Aorta (tissue), 5 donors: ENCODE measurements at regions of chr18 and their contacts with region 1.

Region 1: GRCh38 chr18:52596748-52597435 is 256.9 kb downstream of the DCC start:
- DNase-seq: no peak
- ATAC-seq: no peak
- H3K4me3 ChIP-seq: no peak overlapping the region
- H3K27ac ChIP-seq: no peak overlapping the region
- H3K4me1 ChIP-seq: no peaks in the 10 kb centered on the region
- H3K27me3 ChIP-seq: no peaks in the 10 kb centered on the region

Region 2: DNA sequence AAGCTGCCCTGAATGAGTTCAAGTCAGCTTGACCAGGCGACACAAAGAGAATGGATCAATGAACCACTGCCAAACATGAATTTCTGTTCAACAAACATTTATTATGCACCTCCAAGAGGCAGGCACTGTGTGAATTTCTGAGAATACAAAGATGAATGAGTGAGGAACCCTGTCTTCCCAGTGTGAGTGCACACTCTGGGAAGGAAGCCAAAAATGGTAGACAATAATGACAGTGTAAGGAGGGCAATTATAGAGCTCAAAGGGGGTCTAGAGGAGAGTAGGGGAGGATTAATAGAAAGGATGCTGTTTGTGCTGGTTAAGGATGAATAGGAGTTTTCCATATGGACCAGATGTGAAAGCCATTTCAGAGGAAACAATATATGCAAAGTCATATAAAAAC is 43.5 kb before region 1 on chr18:
- intact Hi-C with region 1: no loop called
- DNase-seq: no peak
- ATAC-seq: no peak
- H3K4me3 ChIP-seq: no peak overlapping the region
- H3K27ac ChIP-seq: no peak overlapping the region
- H3K4me1 ChIP-seq: no peaks in the 10 kb centered on the region
- H3K27me3 ChIP-seq: no peaks in the 10 kb centered on the region

Region 3: DNA sequence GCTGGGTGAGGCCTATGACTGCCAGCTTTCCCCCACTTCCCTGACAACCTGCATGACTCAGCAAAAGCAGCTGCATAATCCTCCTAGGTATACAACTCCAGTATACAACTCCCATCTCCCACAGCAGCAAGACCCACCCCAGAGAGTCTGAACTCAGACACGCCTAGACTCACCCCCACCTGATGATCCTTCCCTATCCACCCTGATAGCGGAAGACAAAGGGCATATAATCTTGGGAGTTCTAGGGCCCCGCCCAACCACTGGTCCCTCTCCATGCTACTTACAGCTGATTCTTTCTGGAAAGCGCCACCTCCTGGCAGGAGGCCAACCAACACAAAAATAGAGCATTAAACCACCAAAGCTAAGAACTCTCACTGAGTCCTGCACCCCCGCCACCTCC is 39.6 kb after region 1 on chr18:
- intact Hi-C with region 1: loop called in 1 of 2 experiments (anchors 2 kb)
- DNase-seq: no peak
- ATAC-seq: no peak
- H3K4me3 ChIP-seq: no peak overlapping the region
- H3K27ac ChIP-seq: no peak overlapping the region
- H3K4me1 ChIP-seq: no peaks in the 10 kb centered on the region
- H3K27me3 ChIP-seq: no peaks in the 10 kb centered on the region

Region 4: DNA sequence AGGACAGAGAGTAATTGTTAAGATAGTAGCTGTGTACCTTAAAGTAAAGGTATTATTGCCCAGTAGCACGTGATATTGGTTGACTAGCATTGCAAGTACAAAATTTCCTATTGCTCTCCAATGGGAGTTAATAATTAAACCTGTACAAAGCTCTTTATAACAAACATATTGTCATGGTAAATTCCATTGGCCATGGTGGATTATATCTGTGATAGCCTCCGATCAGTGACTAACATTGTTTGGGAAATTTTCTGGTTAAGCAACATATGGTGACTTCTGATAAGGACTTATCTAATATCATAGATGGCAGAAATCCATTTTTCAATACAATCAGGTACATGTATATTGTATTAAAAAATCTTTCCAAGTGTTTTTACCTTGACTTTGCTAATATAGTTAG is 103.9 kb after region 1 on chr18:
- intact Hi-C with region 1: no loop called
- DNase-seq: no peak
- ATAC-seq: no peak
- H3K4me3 ChIP-seq: no peak overlapping the region
- H3K27ac ChIP-seq: no peak overlapping the region
- H3K4me1 ChIP-seq: no peaks in the 10 kb centered on the region
- H3K27me3 ChIP-seq: no peaks in the 10 kb centered on the region